Activated CD4-positive, alpha-beta memory T cell treated with anti-CD3 and anti-CD28 coated beads for 36 hours (primary cell): ENCODE measurements at regions of chr3 and their contacts with region 1.

Region 1: DNA sequence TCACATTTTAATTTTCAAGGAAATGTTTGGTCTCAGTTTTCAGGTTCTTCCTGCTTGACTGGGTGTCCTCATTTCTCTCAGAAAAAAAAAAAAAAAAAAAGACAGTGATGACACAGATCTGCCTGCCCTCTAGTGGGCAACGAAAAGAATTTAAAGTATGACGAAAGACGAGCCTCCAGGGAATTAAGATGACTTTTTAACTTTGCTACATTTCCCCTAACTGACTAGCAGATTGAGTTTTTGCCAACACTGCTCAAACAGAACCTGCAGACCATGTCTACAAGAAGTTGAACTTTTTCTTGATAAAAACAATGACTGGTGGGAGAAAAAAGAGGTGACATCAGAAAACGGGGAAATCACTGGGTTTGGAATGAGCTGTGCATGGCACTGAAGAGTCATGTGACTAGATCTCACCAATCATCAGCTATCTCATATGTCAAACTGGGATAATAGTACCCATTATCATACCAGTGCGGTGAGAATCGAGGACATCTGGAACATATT is 40.8 kb downstream of the EOMES start:
- DNase-seq: no peak
- H3K4me3 Mint-ChIP-seq: peak overlapping the region; percentile 68
- H3K27ac Mint-ChIP-seq: peak overlapping the region; percentile 72
- H3K4me1 Mint-ChIP-seq: peaks cover 19% of the 10 kb centered on the region
- H3K27me3 Mint-ChIP-seq: no peaks in the 10 kb centered on the region

Region 2: DNA sequence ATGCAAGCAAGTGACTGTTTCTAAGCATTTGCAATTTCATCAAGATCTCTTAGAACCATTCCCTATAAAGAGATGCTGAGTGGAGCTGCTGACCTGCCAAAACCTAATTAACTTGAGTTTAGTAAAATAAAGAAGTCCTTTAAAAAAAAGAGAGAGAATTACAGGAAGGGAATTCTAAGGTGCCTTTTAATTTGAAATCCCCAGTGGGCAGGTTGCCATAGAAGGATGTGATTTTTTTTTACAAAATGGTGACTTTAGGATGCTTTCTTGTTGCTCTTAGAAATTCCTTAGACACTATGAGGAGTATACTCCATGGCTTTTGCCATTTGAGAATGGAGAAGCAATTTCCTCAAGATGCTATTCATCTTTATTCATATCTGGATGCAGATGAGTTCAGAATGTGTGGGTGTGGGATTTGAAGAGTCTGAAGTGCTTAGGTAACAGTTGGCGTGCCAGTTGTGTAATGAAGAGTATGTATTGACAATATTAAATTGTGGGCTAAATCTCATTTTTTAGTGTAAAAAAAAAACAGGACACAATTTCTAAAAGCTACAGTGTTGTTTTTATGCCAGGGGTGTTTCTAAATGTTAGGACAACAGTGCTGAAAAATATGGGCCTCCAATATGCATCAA is 1045.1 kb before region 1 on chr3:
- CTCF ChIA-PET with region 1: no interaction called
- POLR2A ChIA-PET with region 1: no interaction called
- intact Hi-C with region 1: no loop called
- DNase-seq: no peak
- H3K4me3 Mint-ChIP-seq: no peak overlapping the region
- H3K27ac Mint-ChIP-seq: no peak overlapping the region
- H3K4me1 Mint-ChIP-seq: no peaks in the 10 kb centered on the region
- H3K27me3 Mint-ChIP-seq: no peaks in the 10 kb centered on the region

Region 3: DNA sequence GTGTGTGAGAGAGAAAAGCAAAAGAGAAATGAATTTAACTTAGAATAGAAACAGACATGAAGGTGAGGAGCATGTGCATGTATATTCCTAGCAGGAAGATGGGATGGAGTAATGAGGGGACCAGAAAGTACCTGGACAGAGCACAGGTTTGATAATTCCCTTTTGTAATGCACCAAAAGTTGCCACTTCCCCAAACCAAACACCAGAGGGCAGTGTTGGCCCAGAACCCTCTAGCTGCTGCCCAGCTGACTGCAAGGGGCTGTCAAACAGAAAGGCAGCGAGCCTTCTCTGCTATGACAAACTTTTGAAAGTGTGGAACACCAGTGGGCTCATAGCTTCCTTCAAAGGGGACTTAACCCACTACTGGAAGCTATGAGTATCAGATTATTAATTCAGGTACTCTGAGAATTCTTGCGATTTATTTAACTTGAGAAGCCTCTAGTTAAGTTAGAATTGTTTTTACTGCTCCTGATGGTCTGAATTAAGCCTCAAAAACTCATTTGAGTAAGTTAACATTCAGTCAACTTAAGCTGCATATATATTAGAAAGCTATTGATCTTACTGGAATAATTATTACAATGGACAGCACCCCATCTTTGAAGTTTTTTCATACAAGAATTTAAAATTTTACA is 547.0 kb before region 1 on chr3:
- CTCF ChIA-PET with region 1: interaction called, 6 read pairs
- POLR2A ChIA-PET with region 1: no interaction called
- intact Hi-C with region 1: loop called (anchors 1 kb)
- DNase-seq: peak; percentile 69
- H3K4me3 Mint-ChIP-seq: no peak overlapping the region
- H3K27ac Mint-ChIP-seq: no peak overlapping the region
- H3K4me1 Mint-ChIP-seq: no peaks in the 10 kb centered on the region
- H3K27me3 Mint-ChIP-seq: peaks cover 2% of the 10 kb centered on the region

Region 4: GRCh38 chr3:27312044-27312668 is 369.1 kb before region 1 on chr3:
- CTCF ChIA-PET with region 1: interaction called, 14 read pairs
- POLR2A ChIA-PET with region 1: interaction called, 3 read pairs
- intact Hi-C with region 1: loop called (anchors 1 kb)
- DNase-seq: no peak
- H3K4me3 Mint-ChIP-seq: no peak overlapping the region
- H3K27ac Mint-ChIP-seq: no peak overlapping the region
- H3K4me1 Mint-ChIP-seq: no peaks in the 10 kb centered on the region
- H3K27me3 Mint-ChIP-seq: no peaks in the 10 kb centered on the region

Region 5: DNA sequence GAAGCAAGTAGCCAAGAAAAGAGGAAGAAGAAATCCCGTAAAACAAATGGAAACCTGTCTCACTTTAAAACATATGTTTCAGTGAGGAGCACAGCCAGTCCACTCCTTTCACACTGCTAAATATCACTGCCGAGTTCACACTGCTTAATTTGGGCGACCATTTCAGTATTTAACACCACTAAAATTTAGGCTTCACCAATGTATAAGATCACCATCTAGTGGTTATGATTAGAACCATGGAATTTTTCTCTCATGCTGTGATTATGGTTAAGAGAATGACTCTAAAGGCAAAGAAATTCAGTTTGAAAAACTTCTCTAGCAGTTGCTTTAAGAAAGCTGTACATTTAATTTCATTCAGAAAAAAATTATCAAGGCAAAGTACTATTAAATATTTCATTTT is 213.8 kb before region 1 on chr3:
- CTCF ChIA-PET with region 1: interaction called, 5 read pairs
- POLR2A ChIA-PET with region 1: no interaction called
- intact Hi-C with region 1: loop called (anchors 5 kb)
- DNase-seq: no peak
- H3K4me3 Mint-ChIP-seq: no peak overlapping the region
- H3K27ac Mint-ChIP-seq: peak overlapping the region; percentile 28
- H3K4me1 Mint-ChIP-seq: peaks cover 14% of the 10 kb centered on the region
- H3K27me3 Mint-ChIP-seq: no peaks in the 10 kb centered on the region

Region 6: GRCh38 chr3:27590437-27591298 is 90.6 kb before region 1 on chr3:
- CTCF ChIA-PET with region 1: interaction called, 10 read pairs
- POLR2A ChIA-PET with region 1: no interaction called
- intact Hi-C with region 1: loop called (anchors 2 kb)
- DNase-seq: peak; percentile 13
- H3K4me3 Mint-ChIP-seq: no peak overlapping the region
- H3K27ac Mint-ChIP-seq: peak overlapping the region; percentile 62
- H3K4me1 Mint-ChIP-seq: peaks cover 25% of the 10 kb centered on the region
- H3K27me3 Mint-ChIP-seq: no peaks in the 10 kb centered on the region